ENCODE measurements at regions of chr19 and their contacts with region 1.

Region 1: GRCh38 chr19:44796701-44797115 is 12.2 kb upstream of the BCAM start:
- DNase-seq: no peak
- H3K4me3 ChIP-seq: no peak overlapping the region
- CTCF ChIP-seq: no peak
- POLR2A ChIP-seq: no peak

Region 2: GRCh38 chr19:44677019-44677821 is 119.5 kb before region 1 on chr19:
- intact Hi-C with region 1: no loop called
- DNase-seq: no peak
- H3K4me3 ChIP-seq: no peak overlapping the region
- CTCF ChIP-seq: no peak
- POLR2A ChIP-seq: no peak

Region 3: GRCh38 chr19:44845612-44846454 is 49.1 kb after region 1 on chr19 and contains the start of gene NECTIN2:
- intact Hi-C with region 1: loop called (anchors 10 kb)
- DNase-seq: peak; percentile 99 to 100
- H3K4me3 ChIP-seq: peak within 1 kb of the TSS; percentile 89
- CTCF ChIP-seq: peak in 1 of 3 donors; percentile 53
- POLR2A ChIP-seq: peak in 1 of 2 donors; percentile 69
- total RNA-seq, gene NECTIN2: 75.2 to 91.1 (median 82.4) TPM